A549 (cell line): ENCODE measurements at regions of chr9 and their contacts with region 1.

Region 1: GRCh38 chr9:113591001-113591898 is 127.7 kb downstream of the RGS3 start:
- DNase-seq: peak; percentile 72 to 77
- ATAC-seq: peak; percentile 57 to 68
- H3K4me3 ChIP-seq: no peak overlapping the region
- H3K27ac ChIP-seq: peak overlapping the region; percentile 28 to 53; a peak in 4 of 6 replicates
- H3K4me1 ChIP-seq: peaks cover 21% of the 10 kb centered on the region
- CTCF ChIP-seq: peak; percentile 96
- EP300 ChIP-seq: no peak
- POLR2A ChIP-seq: no peak
- RAD21 ChIP-seq: peak; percentile 98

Region 2: DNA sequence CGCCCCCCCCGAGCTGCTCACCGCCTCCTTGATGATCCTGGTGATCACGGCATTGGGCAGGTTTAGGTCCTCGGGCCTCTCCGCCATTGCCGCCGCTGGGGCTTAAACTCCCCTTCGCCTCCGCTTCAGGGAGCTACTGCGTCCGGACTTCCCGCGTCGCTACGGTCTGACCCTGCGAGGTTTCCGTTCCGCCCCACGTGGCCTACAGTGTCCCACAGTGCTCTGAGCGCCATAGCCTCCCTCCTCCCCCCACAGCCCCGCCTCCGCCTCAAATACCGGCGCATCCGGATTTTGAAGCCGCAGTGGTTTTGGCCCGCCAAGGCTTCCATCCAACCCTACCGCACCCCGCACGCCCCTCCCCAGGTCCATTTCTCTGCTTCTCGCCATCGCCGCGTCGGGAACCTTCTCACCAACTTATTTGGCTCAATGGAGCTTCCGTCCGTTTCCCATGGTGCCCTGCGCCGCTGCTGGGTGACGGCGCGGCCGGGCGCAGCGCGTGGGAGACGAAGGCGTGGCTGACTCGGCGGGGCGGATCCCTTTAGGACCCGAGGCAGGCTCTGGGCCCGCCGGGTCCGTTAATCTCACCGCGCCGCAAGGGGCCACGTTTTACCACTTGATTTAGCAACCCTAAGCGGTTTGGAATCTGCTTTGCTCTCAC is 180.9 kb before region 1 on chr9 and contains the starts of genes C9orf43 and POLE3:
- CTCF ChIA-PET with region 1: interaction called, 7 read pairs
- POLR2A ChIA-PET with region 1: interaction called, 11 read pairs
- DNase-seq: peak; percentile 90 to 97
- ATAC-seq: peak; percentile 97
- H3K4me3 ChIP-seq: peak within 1 kb of the TSS; percentile 70
- H3K27ac ChIP-seq: peak within 1 kb of the TSS; percentile 95 to 98
- H3K4me1 ChIP-seq: peaks cover 8% of the 10 kb centered on the region; the same call in 1 of the 3 replicates
- CTCF ChIP-seq: no peak
- EP300 ChIP-seq: no peak
- POLR2A ChIP-seq: peak; percentile 72
- RAD21 ChIP-seq: no peak
- polyA plus RNA-seq, gene C9orf43: 0.89 and 1.0 TPM in 2 replicates
- polyA plus RNA-seq, gene POLE3: 129 and 143 TPM in 2 replicates

Region 3: DNA sequence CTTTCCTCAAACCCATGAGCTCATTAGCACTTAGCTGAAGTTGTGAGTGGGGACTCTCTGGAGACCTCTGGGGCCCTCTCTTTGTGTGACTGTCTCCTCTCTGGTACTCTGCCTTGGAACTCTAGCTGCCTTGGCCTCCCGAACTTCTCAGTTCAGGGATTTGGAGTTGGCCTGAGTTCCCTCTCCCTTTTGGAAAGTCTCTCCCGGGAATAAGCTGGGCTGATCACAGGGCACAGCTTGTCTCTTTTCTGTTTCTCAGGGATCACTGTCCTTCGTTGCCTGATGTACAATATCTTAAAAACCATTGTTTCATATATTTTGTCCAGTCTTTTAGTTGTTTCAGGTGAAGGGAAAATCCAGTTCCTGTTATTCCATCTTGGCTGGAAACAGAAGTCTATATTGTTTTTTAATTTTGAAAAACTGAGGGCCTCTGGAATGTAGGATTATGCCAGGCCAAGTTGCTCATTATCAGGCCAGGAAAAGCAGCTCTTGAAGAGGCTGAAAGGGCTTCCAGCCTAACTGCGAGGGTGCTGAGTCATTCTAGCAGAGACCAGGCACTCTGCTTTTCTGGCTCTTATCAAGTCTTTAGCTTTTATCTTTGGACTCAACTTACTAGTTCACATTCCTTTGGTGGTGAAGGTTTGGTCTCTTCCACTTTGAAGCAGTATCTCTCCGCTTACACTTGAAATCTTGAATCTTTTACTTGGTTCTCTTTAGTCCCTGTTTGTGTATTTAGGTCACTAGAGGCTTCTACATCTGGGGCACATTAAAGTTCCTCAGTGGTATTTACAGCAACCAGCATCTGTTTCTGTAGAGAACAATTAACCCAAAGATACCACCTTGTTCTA is 136.1 kb before region 1 on chr9:
- CTCF ChIA-PET with region 1: interaction called, 390 read pairs
- POLR2A ChIA-PET with region 1: no interaction called
- DNase-seq: peak in 1 of 2 experiments; percentile 72
- ATAC-seq: peak in 1 of 2 experiments; percentile 89; a peak in 3 of 6 replicates
- H3K4me3 ChIP-seq: no peak overlapping the region
- H3K27ac ChIP-seq: peak overlapping the region; percentile 68 to 85
- H3K4me1 ChIP-seq: peaks cover 20% of the 10 kb centered on the region
- CTCF ChIP-seq: no peak
- EP300 ChIP-seq: no peak
- POLR2A ChIP-seq: no peak
- RAD21 ChIP-seq: no peak

Region 4: GRCh38 chr9:113523421-113524236 is 67.6 kb before region 1 on chr9:
- CTCF ChIA-PET with region 1: interaction called, 10 read pairs
- POLR2A ChIA-PET with region 1: interaction called, 3 read pairs
- DNase-seq: no peak
- ATAC-seq: no peak
- H3K4me3 ChIP-seq: no peak overlapping the region
- H3K27ac ChIP-seq: no peak overlapping the region
- H3K4me1 ChIP-seq: peaks cover 36% of the 10 kb centered on the region
- CTCF ChIP-seq: no peak
- EP300 ChIP-seq: no peak
- POLR2A ChIP-seq: no peak
- RAD21 ChIP-seq: no peak

Region 5: DNA sequence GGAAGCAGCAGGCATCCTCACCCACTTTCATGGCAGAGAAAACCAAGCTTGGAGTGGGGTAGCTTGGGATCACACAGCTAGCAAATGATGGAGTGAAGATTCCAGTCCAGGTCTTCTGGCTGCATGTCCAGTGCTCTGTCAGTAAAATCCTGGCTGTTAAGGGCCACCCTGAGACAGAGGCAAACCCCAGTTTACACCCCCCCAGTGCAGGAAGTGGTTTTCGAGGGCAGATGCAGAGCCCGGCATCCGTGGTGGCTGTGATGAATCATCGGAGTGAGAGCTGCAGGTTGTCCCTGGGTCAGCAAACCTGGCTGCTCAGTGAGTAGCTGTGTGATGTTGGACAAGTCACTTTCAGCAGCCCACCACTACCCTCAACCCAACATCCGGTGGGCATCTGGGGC is 12.4 kb before region 1 on chr9:
- CTCF ChIA-PET with region 1: interaction called, 145 read pairs
- POLR2A ChIA-PET with region 1: interaction called, 7 read pairs
- DNase-seq: peak; percentile 65 to 78
- ATAC-seq: peak; percentile 75 to 80
- H3K4me3 ChIP-seq: no peak overlapping the region
- H3K27ac ChIP-seq: peak overlapping the region; percentile 36 to 82; a peak in 5 of 6 replicates
- H3K4me1 ChIP-seq: peaks cover 46% of the 10 kb centered on the region
- CTCF ChIP-seq: no peak
- EP300 ChIP-seq: no peak
- POLR2A ChIP-seq: no peak
- RAD21 ChIP-seq: no peak

Region 6: GRCh38 chr9:113632776-113633590 is 41.7 kb after region 1 on chr9:
- CTCF ChIA-PET with region 1: interaction called, 33 read pairs
- POLR2A ChIA-PET with region 1: no interaction called
- DNase-seq: no peak
- ATAC-seq: no peak
- H3K4me3 ChIP-seq: no peak overlapping the region
- H3K27ac ChIP-seq: no peak overlapping the region
- H3K4me1 ChIP-seq: no peaks in the 10 kb centered on the region
- CTCF ChIP-seq: no peak
- EP300 ChIP-seq: no peak
- POLR2A ChIP-seq: no peak
- RAD21 ChIP-seq: no peak